ENCODE measurements at regions of chr3 and their contacts with region 1.

Region 1: GRCh38 chr3:122415720-122416654 is at the start of gene WDR5B:
- DNase-seq: peak; percentile 95 to 99 (median 99)
- ATAC-seq: peak; percentile 94
- H3K4me3 ChIP-seq: peak within 1 kb of the TSS; percentile 96
- H3K4me3 Mint-ChIP-seq: peak within 1 kb of the TSS; percentile 92 to 99 (median 97)
- H3K27ac ChIP-seq: peak within 1 kb of the TSS; percentile 93
- H3K27ac Mint-ChIP-seq: peak within 1 kb of the TSS; percentile 98 to 100 (median 100)
- H3K4me1 ChIP-seq: peaks cover 19 to 24% of the 10 kb centered on the region in 2 donors
- H3K4me1 Mint-ChIP-seq: peaks cover 24 to 72% (median 65%) of the 10 kb centered on the region in 7 donors
- H3K27me3 ChIP-seq: no peaks in the 10 kb centered on the region
- H3K27me3 Mint-ChIP-seq: peaks cover 0 to 3% (median 0%) of the 10 kb centered on the region in 5 donors
- total RNA-seq, gene WDR5B: 4.8 to 19.4 (median 6.4) TPM

Region 2: GRCh38 chr3:121918779-121919483 is 497.1 kb before region 1 on chr3:
- CTCF ChIA-PET with region 1: no interaction called
- POLR2A ChIA-PET with region 1: no interaction called
- intact Hi-C with region 1: no loop called
- DNase-seq: no peak
- ATAC-seq: no peak
- H3K4me3 ChIP-seq: no peak overlapping the region
- H3K4me3 Mint-ChIP-seq: no peak overlapping the region
- H3K27ac ChIP-seq: no peak overlapping the region
- H3K27ac Mint-ChIP-seq: no peak overlapping the region
- H3K4me1 ChIP-seq: no peaks in the 10 kb centered on the region
- H3K4me1 Mint-ChIP-seq: no peaks in the 10 kb centered on the region
- H3K27me3 ChIP-seq: no peaks in the 10 kb centered on the region
- H3K27me3 Mint-ChIP-seq: no peaks in the 10 kb centered on the region

Region 3: GRCh38 chr3:122374034-122374433 is 42.0 kb before region 1 on chr3:
- CTCF ChIA-PET with region 1: no interaction called
- POLR2A ChIA-PET with region 1: no interaction called
- intact Hi-C with region 1: no loop called
- DNase-seq: no peak
- ATAC-seq: no peak
- H3K4me3 ChIP-seq: no peak overlapping the region
- H3K4me3 Mint-ChIP-seq: no peak overlapping the region
- H3K27ac ChIP-seq: no peak overlapping the region
- H3K27ac Mint-ChIP-seq: no peak overlapping the region
- H3K4me1 ChIP-seq: no peaks in the 10 kb centered on the region
- H3K4me1 Mint-ChIP-seq: peaks cover 4 to 20% (median 11%) of the 10 kb centered on the region in 7 donors
- H3K27me3 ChIP-seq: no peaks in the 10 kb centered on the region
- H3K27me3 Mint-ChIP-seq: no peaks in the 10 kb centered on the region

Region 4: GRCh38 chr3:122392868-122393844 is 22.8 kb before region 1 on chr3:
- CTCF ChIA-PET with region 1: no interaction called
- POLR2A ChIA-PET with region 1: interaction called, 10 read pairs
- intact Hi-C with region 1: no loop called
- DNase-seq: peak in 7 of 9 donors; percentile 27 to 56 (median 46)
- ATAC-seq: peak; percentile 75
- H3K4me3 ChIP-seq: no peak overlapping the region
- H3K4me3 Mint-ChIP-seq: no peak overlapping the region
- H3K27ac ChIP-seq: no peak overlapping the region
- H3K27ac Mint-ChIP-seq: no peak overlapping the region
- H3K4me1 ChIP-seq: no peaks in the 10 kb centered on the region
- H3K4me1 Mint-ChIP-seq: peaks cover 7 to 36% (median 18%) of the 10 kb centered on the region in 7 donors
- H3K27me3 ChIP-seq: no peaks in the 10 kb centered on the region
- H3K27me3 Mint-ChIP-seq: no peaks in the 10 kb centered on the region

Region 5: GRCh38 chr3:122481390-122481789 is 65.4 kb after region 1 on chr3:
- CTCF ChIA-PET with region 1: no interaction called
- POLR2A ChIA-PET with region 1: no interaction called
- intact Hi-C with region 1: no loop called
- DNase-seq: no peak
- ATAC-seq: no peak
- H3K4me3 ChIP-seq: no peak overlapping the region
- H3K4me3 Mint-ChIP-seq: no peak overlapping the region
- H3K27ac ChIP-seq: no peak overlapping the region
- H3K27ac Mint-ChIP-seq: no peak overlapping the region
- H3K4me1 ChIP-seq: peaks cover 0 to 6% of the 10 kb centered on the region in 2 donors
- H3K4me1 Mint-ChIP-seq: peaks cover 14 to 65% (median 55%) of the 10 kb centered on the region in 7 donors
- H3K27me3 ChIP-seq: no peaks in the 10 kb centered on the region
- H3K27me3 Mint-ChIP-seq: no peaks in the 10 kb centered on the region

Region 6: DNA sequence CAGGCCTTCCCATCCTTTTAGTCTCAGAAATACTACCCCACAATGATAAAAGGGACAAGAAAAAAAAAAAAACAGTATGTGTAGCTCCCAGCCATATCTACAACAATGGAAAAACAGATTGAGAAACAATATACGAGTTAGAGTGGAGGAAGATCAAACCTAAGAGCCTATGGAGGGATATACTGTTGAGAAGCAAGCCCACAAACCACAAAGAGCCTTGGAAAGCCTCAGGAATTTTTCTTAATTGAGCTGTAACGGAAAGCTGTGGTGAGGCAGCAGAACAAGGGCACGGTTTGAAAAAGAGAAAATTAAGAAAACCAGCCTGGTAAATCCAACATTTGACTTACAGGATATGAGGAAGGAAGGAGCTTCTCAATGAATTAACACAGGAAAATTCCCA is 77.3 kb after region 1 on chr3:
- CTCF ChIA-PET with region 1: no interaction called
- POLR2A ChIA-PET with region 1: no interaction called
- intact Hi-C with region 1: no loop called
- DNase-seq: no peak
- ATAC-seq: no peak
- H3K4me3 ChIP-seq: no peak overlapping the region
- H3K4me3 Mint-ChIP-seq: no peak overlapping the region
- H3K27ac ChIP-seq: no peak overlapping the region
- H3K27ac Mint-ChIP-seq: peak overlapping the region in 1 of 9 donors; percentile 28
- H3K4me1 ChIP-seq: peaks cover 5 to 13% of the 10 kb centered on the region in 2 donors
- H3K4me1 Mint-ChIP-seq: peaks cover 14 to 55% (median 47%) of the 10 kb centered on the region in 7 donors
- H3K27me3 ChIP-seq: no peaks in the 10 kb centered on the region
- H3K27me3 Mint-ChIP-seq: no peaks in the 10 kb centered on the region

Region 7: GRCh38 chr3:122564155-122564912 is 148.3 kb after region 1 on chr3 and contains the starts of genes DTX3L and PARP9:
- CTCF ChIA-PET with region 1: no interaction called
- POLR2A ChIA-PET with region 1: interaction called, 12 read pairs
- intact Hi-C with region 1: loop called (anchors 1 kb)
- DNase-seq: peak; percentile 50 to 82 (median 77)
- ATAC-seq: peak; percentile 95
- H3K4me3 ChIP-seq: peak within 1 kb of the TSS; percentile 75
- H3K4me3 Mint-ChIP-seq: peak within 1 kb of the TSS; percentile 88 to 100 (median 98)
- H3K27ac ChIP-seq: peak within 1 kb of the TSS; percentile 98
- H3K27ac Mint-ChIP-seq: peak within 1 kb of the TSS; percentile 97 to 99 (median 98)
- H3K4me1 ChIP-seq: peaks cover 34 to 45% of the 10 kb centered on the region in 2 donors
- H3K4me1 Mint-ChIP-seq: peaks cover 58 to 91% (median 79%) of the 10 kb centered on the region in 7 donors
- H3K27me3 ChIP-seq: no peaks in the 10 kb centered on the region
- H3K27me3 Mint-ChIP-seq: no peaks in the 10 kb centered on the region
- total RNA-seq, gene DTX3L: 28.6 to 164 (median 35.8) TPM
- total RNA-seq, gene PARP9: 17.6 to 165 (median 24.4) TPM

Region 8: GRCh38 chr3:123201566-123202427 is 785.8 kb after region 1 on chr3 and contains the start of gene SEC22A:
- CTCF ChIA-PET with region 1: no interaction called
- POLR2A ChIA-PET with region 1: interaction called, 3 read pairs
- intact Hi-C with region 1: loop called (anchors 1 kb)
- DNase-seq: peak; percentile 89 to 99 (median 97)
- ATAC-seq: peak; percentile 97
- H3K4me3 ChIP-seq: peak within 1 kb of the TSS; percentile 90
- H3K4me3 Mint-ChIP-seq: peak within 1 kb of the TSS; percentile 82 to 98 (median 92)
- H3K27ac ChIP-seq: peak within 1 kb of the TSS; percentile 99
- H3K27ac Mint-ChIP-seq: peak within 1 kb of the TSS; percentile 97 to 100 (median 99)
- H3K4me1 ChIP-seq: peaks cover 12% of the 10 kb centered on the region in 2 donors
- H3K4me1 Mint-ChIP-seq: peaks cover 13 to 41% (median 31%) of the 10 kb centered on the region in 7 donors
- H3K27me3 ChIP-seq: no peaks in the 10 kb centered on the region
- H3K27me3 Mint-ChIP-seq: peaks cover 0 to 9% (median 2%) of the 10 kb centered on the region in 5 donors
- total RNA-seq, gene SEC22A: 15.0 to 20.1 (median 17.1) TPM

Measured in naive thymus-derived CD4-positive, alpha-beta T cell (primary cell).